CD4-positive, alpha-beta T cell (primary cell): ENCODE measurements at regions of chr2 and their contacts with region 1.

Region 1: GRCh38 chr2:112726497-112727190 is 5.8 kb downstream of the NT5DC4 start:
- DNase-seq: peak; percentile 76 to 92 (median 85)
- ATAC-seq: peak; percentile 99
- H3K4me3 ChIP-seq: no peak overlapping the region
- H3K4me3 Mint-ChIP-seq: no peak overlapping the region
- H3K27ac ChIP-seq: no peak overlapping the region
- H3K27ac Mint-ChIP-seq: no peak overlapping the region
- H3K4me1 ChIP-seq: peaks cover 7% of the 10 kb centered on the region
- H3K4me1 Mint-ChIP-seq: peaks cover 4% of the 10 kb centered on the region
- H3K27me3 ChIP-seq: no peaks in the 10 kb centered on the region
- H3K27me3 Mint-ChIP-seq: no peaks in the 10 kb centered on the region
- CTCF ChIP-seq: peak; percentile 97

Region 2: GRCh38 chr2:112472547-112473263 is 253.9 kb before region 1 on chr2:
- CTCF ChIA-PET with region 1: no interaction called
- POLR2A ChIA-PET with region 1: no interaction called
- intact Hi-C with region 1: loop called in 1 of 2 experiments (anchors 2 kb)
- DNase-seq: no peak
- ATAC-seq: no peak
- H3K4me3 ChIP-seq: no peak overlapping the region
- H3K4me3 Mint-ChIP-seq: no peak overlapping the region
- H3K27ac ChIP-seq: no peak overlapping the region
- H3K27ac Mint-ChIP-seq: no peak overlapping the region
- H3K4me1 ChIP-seq: no peaks in the 10 kb centered on the region
- H3K4me1 Mint-ChIP-seq: no peaks in the 10 kb centered on the region
- H3K27me3 ChIP-seq: no peaks in the 10 kb centered on the region
- H3K27me3 Mint-ChIP-seq: no peaks in the 10 kb centered on the region
- CTCF ChIP-seq: no peak

Region 3: DNA sequence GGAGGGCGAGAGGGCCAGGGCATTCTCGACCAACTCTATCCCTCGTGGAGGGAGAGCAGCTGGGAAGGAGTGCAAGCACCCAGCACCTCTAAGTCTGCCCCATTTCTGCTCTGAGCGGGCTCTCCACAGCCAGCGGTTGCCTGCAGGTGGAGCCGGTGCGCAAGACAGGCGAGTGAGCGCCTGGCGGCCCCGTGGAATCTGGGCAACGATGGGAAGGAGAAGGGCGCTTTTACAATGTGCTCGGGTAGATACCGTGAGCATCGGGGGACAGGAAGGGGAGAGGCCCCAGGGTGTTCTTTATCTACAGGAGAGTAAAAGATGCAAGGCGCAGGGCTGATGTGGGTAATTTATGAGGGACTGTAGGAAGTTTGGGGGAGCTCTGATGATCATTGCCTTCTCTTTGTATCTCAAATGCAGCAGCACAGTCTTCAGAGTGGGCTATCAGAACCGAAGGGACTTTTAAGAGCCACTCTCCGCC is 245.6 kb before region 1 on chr2:
- CTCF ChIA-PET with region 1: interaction called, 3 read pairs
- POLR2A ChIA-PET with region 1: no interaction called
- intact Hi-C with region 1: loop called in 1 of 2 experiments (anchors 2 kb)
- DNase-seq: peak; percentile 72 to 91 (median 79)
- ATAC-seq: peak; percentile 81
- H3K4me3 ChIP-seq: peak overlapping the region; percentile 77
- H3K4me3 Mint-ChIP-seq: peak overlapping the region; percentile 93
- H3K27ac ChIP-seq: peak overlapping the region; percentile 48 to 75
- H3K27ac Mint-ChIP-seq: peak overlapping the region; percentile 85
- H3K4me1 ChIP-seq: peaks cover 28% of the 10 kb centered on the region
- H3K4me1 Mint-ChIP-seq: peaks cover 25% of the 10 kb centered on the region
- H3K27me3 ChIP-seq: no peaks in the 10 kb centered on the region
- H3K27me3 Mint-ChIP-seq: no peaks in the 10 kb centered on the region
- CTCF ChIP-seq: peak; percentile 84

Region 4: GRCh38 chr2:112601751-112602150 is 124.9 kb before region 1 on chr2:
- CTCF ChIA-PET with region 1: interaction called, 60 read pairs
- POLR2A ChIA-PET with region 1: no interaction called
- intact Hi-C with region 1: loop called (anchors 1 kb)
- DNase-seq: no peak
- ATAC-seq: no peak
- H3K4me3 ChIP-seq: no peak overlapping the region
- H3K4me3 Mint-ChIP-seq: no peak overlapping the region
- H3K27ac ChIP-seq: no peak overlapping the region
- H3K27ac Mint-ChIP-seq: no peak overlapping the region
- H3K4me1 ChIP-seq: peaks cover 4% of the 10 kb centered on the region
- H3K4me1 Mint-ChIP-seq: peaks cover 5% of the 10 kb centered on the region
- H3K27me3 ChIP-seq: no peaks in the 10 kb centered on the region
- H3K27me3 Mint-ChIP-seq: no peaks in the 10 kb centered on the region
- CTCF ChIP-seq: no peak

Region 5: DNA sequence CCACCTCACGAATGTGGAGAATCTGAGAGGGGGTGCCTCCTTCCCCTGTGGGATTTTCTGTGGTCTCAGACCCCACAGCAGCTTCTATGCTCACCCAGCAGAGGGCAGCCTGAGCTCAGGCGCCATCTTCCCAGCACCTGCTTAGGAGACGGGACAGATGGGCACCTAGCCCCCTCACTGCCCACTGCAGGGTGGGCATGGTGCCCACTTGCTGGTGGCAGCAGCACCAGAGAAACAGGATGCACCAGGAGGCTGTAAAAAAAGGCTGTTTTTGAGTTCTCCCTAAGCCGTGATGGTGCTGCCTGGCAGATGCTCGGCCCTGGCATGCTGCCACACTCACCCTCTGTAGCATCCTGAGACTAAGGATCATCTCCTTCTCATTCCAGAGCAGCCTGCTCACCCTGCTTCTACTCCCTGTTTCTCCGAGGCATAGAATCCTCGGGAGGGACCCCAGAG is 100.0 kb before region 1 on chr2:
- CTCF ChIA-PET with region 1: interaction called, 26 read pairs
- POLR2A ChIA-PET with region 1: interaction called, 3 read pairs
- intact Hi-C with region 1: loop called (anchors 1 kb)
- DNase-seq: peak; percentile 43 to 83 (median 60)
- ATAC-seq: peak; percentile 38
- H3K4me3 ChIP-seq: peak overlapping the region; percentile 41
- H3K4me3 Mint-ChIP-seq: peak overlapping the region; percentile 74
- H3K27ac ChIP-seq: peak overlapping the region in 1 of 2 donors; percentile 33
- H3K27ac Mint-ChIP-seq: peak overlapping the region; percentile 90
- H3K4me1 ChIP-seq: peaks cover 72% of the 10 kb centered on the region
- H3K4me1 Mint-ChIP-seq: peaks cover 69% of the 10 kb centered on the region
- H3K27me3 ChIP-seq: no peaks in the 10 kb centered on the region
- H3K27me3 Mint-ChIP-seq: no peaks in the 10 kb centered on the region
- CTCF ChIP-seq: peak; percentile 95

Region 6: GRCh38 chr2:112692496-112692911 is 34.1 kb before region 1 on chr2:
- CTCF ChIA-PET with region 1: interaction called, 5 read pairs
- POLR2A ChIA-PET with region 1: no interaction called
- intact Hi-C with region 1: loop called in 1 of 2 experiments (anchors 2 kb)
- DNase-seq: peak in 12 of 14 experiments; percentile 12 to 85 (median 35)
- ATAC-seq: peak; percentile 69
- H3K4me3 ChIP-seq: no peak overlapping the region
- H3K4me3 Mint-ChIP-seq: peak overlapping the region; percentile 14
- H3K27ac ChIP-seq: peak overlapping the region in 1 of 2 donors; percentile 48
- H3K27ac Mint-ChIP-seq: peak overlapping the region; percentile 51
- H3K4me1 ChIP-seq: peaks cover 31% of the 10 kb centered on the region
- H3K4me1 Mint-ChIP-seq: peaks cover 22% of the 10 kb centered on the region
- H3K27me3 ChIP-seq: peaks cover 0 to 3% of the 10 kb centered on the region in 2 experiments
- H3K27me3 Mint-ChIP-seq: no peaks in the 10 kb centered on the region
- CTCF ChIP-seq: no peak